Naive thymus-derived CD4-positive, alpha-beta T cell (primary cell): ENCODE measurements at regions of chr12 and their contacts with region 1.

Region 1: DNA sequence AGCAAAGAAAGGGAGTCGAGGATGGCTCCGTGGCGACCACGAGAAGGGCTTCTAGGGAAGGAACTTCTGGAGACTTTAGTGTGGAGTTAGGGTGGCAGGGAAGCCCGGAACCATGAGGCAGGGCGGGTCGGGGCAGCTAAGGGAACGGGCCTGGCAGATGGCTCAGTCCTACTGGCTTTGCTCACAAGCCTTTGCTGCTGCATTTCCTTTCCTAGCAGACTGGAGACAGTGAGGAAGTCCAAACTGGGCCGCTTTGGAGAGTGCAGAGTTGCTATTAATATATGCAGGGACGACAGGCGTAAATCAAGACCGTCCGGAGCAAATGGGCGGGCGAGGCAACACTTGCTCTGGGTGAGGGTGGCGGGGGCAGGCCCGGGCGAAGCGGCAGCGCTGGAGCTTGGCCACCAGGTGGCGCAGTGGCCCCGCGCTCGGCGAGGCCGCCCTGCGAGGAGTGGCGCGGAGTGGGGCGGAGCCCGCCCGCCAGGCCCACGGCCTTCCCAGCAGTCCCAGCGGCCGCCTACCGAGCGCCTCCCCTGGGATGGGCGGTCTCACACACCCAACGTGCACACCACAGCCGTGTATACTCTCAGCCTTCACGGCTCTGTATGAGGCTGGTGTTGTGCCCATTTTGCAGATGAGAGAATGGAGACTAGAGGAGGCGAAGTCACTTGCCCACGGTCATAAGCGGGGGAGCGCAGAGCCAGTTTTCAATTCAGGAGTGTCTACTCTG is 24.4 kb upstream of the LRTM2 start:
- DNase-seq: peak; percentile 89 to 98 (median 93)
- ATAC-seq: peak; percentile 97
- H3K4me3 ChIP-seq: peak overlapping the region; percentile 74
- H3K4me3 Mint-ChIP-seq: peak overlapping the region; percentile 85 to 95 (median 93)
- H3K27ac ChIP-seq: peak overlapping the region; percentile 80
- H3K27ac Mint-ChIP-seq: peak overlapping the region; percentile 82 to 97 (median 91)
- H3K4me1 ChIP-seq: peaks cover 6 to 13% of the 10 kb centered on the region in 2 donors
- H3K4me1 Mint-ChIP-seq: peaks cover 10 to 24% (median 19%) of the 10 kb centered on the region in 7 donors
- H3K27me3 ChIP-seq: no peaks in the 10 kb centered on the region
- H3K27me3 Mint-ChIP-seq: no peaks in the 10 kb centered on the region

Region 2: GRCh38 chr12:389139-390096 is 1406.5 kb before region 1 on chr12 and contains the start of gene KDM5A:
- CTCF ChIA-PET with region 1: no interaction called
- POLR2A ChIA-PET with region 1: no interaction called
- intact Hi-C with region 1: loop called in 1 of 2 experiments (anchors 2 kb)
- DNase-seq: peak; percentile 82 to 97 (median 94)
- ATAC-seq: peak; percentile 97
- H3K4me3 ChIP-seq: peak within 1 kb of the TSS; percentile 96
- H3K4me3 Mint-ChIP-seq: peak within 1 kb of the TSS; percentile 91 to 100 (median 97)
- H3K27ac ChIP-seq: peak within 1 kb of the TSS; percentile 91
- H3K27ac Mint-ChIP-seq: peak within 1 kb of the TSS; percentile 95 to 100 (median 99)
- H3K4me1 ChIP-seq: peaks cover 31% of the 10 kb centered on the region in 2 donors
- H3K4me1 Mint-ChIP-seq: peaks cover 28 to 55% (median 39%) of the 10 kb centered on the region in 7 donors
- H3K27me3 ChIP-seq: no peaks in the 10 kb centered on the region
- H3K27me3 Mint-ChIP-seq: peaks cover 0 to 3% (median 0%) of the 10 kb centered on the region in 5 donors
- total RNA-seq, gene KDM5A: 110 to 138 (median 124) TPM

Region 3: GRCh38 chr12:1634590-1635191 is 161.3 kb before region 1 on chr12:
- CTCF ChIA-PET with region 1: interaction called, 38 read pairs
- POLR2A ChIA-PET with region 1: no interaction called
- intact Hi-C with region 1: loop called (anchors 1 kb)
- DNase-seq: peak; percentile 21 to 59 (median 44)
- ATAC-seq: peak; percentile 71
- H3K4me3 ChIP-seq: no peak overlapping the region
- H3K4me3 Mint-ChIP-seq: no peak overlapping the region
- H3K27ac ChIP-seq: no peak overlapping the region
- H3K27ac Mint-ChIP-seq: no peak overlapping the region
- H3K4me1 ChIP-seq: peaks cover 0 to 8% of the 10 kb centered on the region in 2 donors
- H3K4me1 Mint-ChIP-seq: peaks cover 0 to 17% (median 13%) of the 10 kb centered on the region in 7 donors
- H3K27me3 ChIP-seq: peaks cover 0 to 4% of the 10 kb centered on the region in 2 donors
- H3K27me3 Mint-ChIP-seq: peaks cover 28 to 61% (median 33%) of the 10 kb centered on the region in 5 donors

Region 4: GRCh38 chr12:1661553-1662335 is 134.2 kb before region 1 on chr12:
- CTCF ChIA-PET with region 1: interaction called, 278 read pairs
- POLR2A ChIA-PET with region 1: interaction called, 15 read pairs
- intact Hi-C with region 1: loop called in 1 of 2 experiments (anchors 1 kb)
- DNase-seq: peak; percentile 74 to 84 (median 82)
- ATAC-seq: peak; percentile 93
- H3K4me3 ChIP-seq: peak overlapping the region; percentile 64
- H3K4me3 Mint-ChIP-seq: peak overlapping the region; percentile 70 to 86 (median 78)
- H3K27ac ChIP-seq: peak overlapping the region; percentile 66
- H3K27ac Mint-ChIP-seq: peak overlapping the region in 8 of 9 donors; percentile 62 to 87 (median 82)
- H3K4me1 ChIP-seq: peaks cover 5 to 7% of the 10 kb centered on the region in 2 donors
- H3K4me1 Mint-ChIP-seq: peaks cover 14 to 37% (median 31%) of the 10 kb centered on the region in 7 donors
- H3K27me3 ChIP-seq: no peaks in the 10 kb centered on the region
- H3K27me3 Mint-ChIP-seq: peaks cover 0 to 2% (median 0%) of the 10 kb centered on the region in 5 donors

Region 5: GRCh38 chr12:1939801-1940607 is 144.1 kb after region 1 on chr12:
- CTCF ChIA-PET with region 1: interaction called, 152 read pairs
- POLR2A ChIA-PET with region 1: interaction called, 53 read pairs
- intact Hi-C with region 1: loop called (anchors 1 kb)
- DNase-seq: peak; percentile 75 to 92 (median 84)
- ATAC-seq: peak; percentile 100
- H3K4me3 ChIP-seq: no peak overlapping the region
- H3K4me3 Mint-ChIP-seq: peak overlapping the region in 1 of 10 donors; percentile 25
- H3K27ac ChIP-seq: no peak overlapping the region
- H3K27ac Mint-ChIP-seq: peak overlapping the region in 5 of 9 donors; percentile 2 to 65 (median 47)
- H3K4me1 ChIP-seq: peaks cover 0 to 3% of the 10 kb centered on the region in 2 donors
- H3K4me1 Mint-ChIP-seq: peaks cover 0 to 13% (median 4%) of the 10 kb centered on the region in 7 donors
- H3K27me3 ChIP-seq: no peaks in the 10 kb centered on the region
- H3K27me3 Mint-ChIP-seq: no peaks in the 10 kb centered on the region

Region 6: GRCh38 chr12:2057041-2057794 is 261.3 kb after region 1 on chr12:
- CTCF ChIA-PET with region 1: no interaction called
- POLR2A ChIA-PET with region 1: no interaction called
- intact Hi-C with region 1: loop called in 1 of 2 experiments (anchors 5 kb)
- DNase-seq: peak in 1 of 9 donors; percentile 34
- ATAC-seq: no peak
- H3K4me3 ChIP-seq: no peak overlapping the region
- H3K4me3 Mint-ChIP-seq: no peak overlapping the region
- H3K27ac ChIP-seq: no peak overlapping the region
- H3K27ac Mint-ChIP-seq: no peak overlapping the region
- H3K4me1 ChIP-seq: no peaks in the 10 kb centered on the region
- H3K4me1 Mint-ChIP-seq: peaks cover 6 to 13% (median 10%) of the 10 kb centered on the region in 7 donors
- H3K27me3 ChIP-seq: no peaks in the 10 kb centered on the region
- H3K27me3 Mint-ChIP-seq: peaks cover 30 to 70% (median 37%) of the 10 kb centered on the region in 5 donors

Region 7: GRCh38 chr12:2783936-2784600 is 988.1 kb after region 1 on chr12:
- CTCF ChIA-PET with region 1: no interaction called
- POLR2A ChIA-PET with region 1: no interaction called
- intact Hi-C with region 1: loop called in 1 of 2 experiments (anchors 2 kb)
- DNase-seq: peak in 8 of 9 donors; percentile 12 to 59 (median 42)
- ATAC-seq: peak; percentile 88
- H3K4me3 ChIP-seq: peak overlapping the region; percentile 27
- H3K4me3 Mint-ChIP-seq: peak overlapping the region; percentile 70 to 87 (median 78)
- H3K27ac ChIP-seq: no peak overlapping the region
- H3K27ac Mint-ChIP-seq: peak overlapping the region in 1 of 9 donors; percentile 66
- H3K4me1 ChIP-seq: peaks cover 0 to 6% of the 10 kb centered on the region in 2 donors
- H3K4me1 Mint-ChIP-seq: peaks cover 4 to 13% (median 9%) of the 10 kb centered on the region in 7 donors
- H3K27me3 ChIP-seq: no peaks in the 10 kb centered on the region
- H3K27me3 Mint-ChIP-seq: peaks cover 5 to 46% (median 15%) of the 10 kb centered on the region in 5 donors